Common myeloid progenitor, CD34-positive (primary cell): ENCODE measurements at regions of chr17 and their contacts with region 1.

Region 1: GRCh38 chr17:80866147-80866793 is 125.4 kb upstream of the CHMP6 start:
- DNase-seq: peak; percentile 53 to 67 (median 62)
- H3K4me3 ChIP-seq: no peak overlapping the region
- H3K27ac ChIP-seq: no peak overlapping the region
- H3K4me1 ChIP-seq: peaks cover 5 to 18% (median 14%) of the 10 kb centered on the region in 4 experiments
- H3K27me3 ChIP-seq: no peaks in the 10 kb centered on the region

Region 2: DNA sequence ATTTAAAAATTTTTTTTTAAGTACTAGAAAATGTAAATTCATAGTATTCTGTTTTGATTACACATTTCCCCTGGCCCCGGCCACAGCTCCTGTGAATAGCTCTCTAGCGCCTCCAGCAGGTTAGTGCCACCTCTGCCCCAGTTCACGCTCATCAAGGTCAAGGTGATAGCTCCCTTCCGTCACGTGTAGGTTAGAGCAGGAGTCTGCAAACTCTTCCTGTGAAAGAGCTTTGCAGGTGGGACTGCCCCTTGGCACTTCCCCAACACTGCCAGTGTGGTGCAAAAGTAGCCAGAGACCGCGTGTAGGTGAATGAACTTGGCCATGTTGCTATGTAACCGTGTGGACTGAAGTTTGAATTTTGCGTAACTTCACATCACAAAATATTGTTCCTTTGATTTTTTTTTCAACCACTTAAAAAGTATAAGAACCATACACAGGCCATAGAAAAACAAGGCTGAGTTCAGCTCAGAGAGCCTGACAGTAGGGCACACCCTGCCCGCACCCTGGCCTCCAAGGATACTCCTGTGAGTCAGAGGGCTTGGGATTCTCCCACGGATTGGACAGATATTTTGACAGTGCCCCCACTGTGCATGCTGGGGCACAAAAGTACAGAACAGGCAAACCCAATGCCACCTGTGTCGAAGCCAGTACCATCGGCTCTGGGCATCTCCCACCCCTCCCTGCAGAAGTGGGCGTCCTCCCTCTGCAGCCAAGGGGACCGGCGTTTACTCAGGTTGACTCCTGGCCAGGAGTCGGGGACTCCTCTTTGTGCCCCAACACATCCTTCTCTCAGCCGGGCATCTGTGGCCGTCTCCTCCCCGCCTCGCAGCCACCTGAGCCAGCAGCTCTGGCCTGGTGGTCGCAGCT is 33.4 kb after region 1 on chr17:
- CTCF ChIA-PET with region 1: interaction called, 10 read pairs
- POLR2A ChIA-PET with region 1: interaction called, 3 read pairs
- DNase-seq: peak; percentile 40 to 70 (median 61)
- H3K4me3 ChIP-seq: no peak overlapping the region
- H3K27ac ChIP-seq: no peak overlapping the region
- H3K4me1 ChIP-seq: no peaks in the 10 kb centered on the region
- H3K27me3 ChIP-seq: no peaks in the 10 kb centered on the region